ENCODE measurements at regions of chr9 and their contacts with region 1.

Region 1: DNA sequence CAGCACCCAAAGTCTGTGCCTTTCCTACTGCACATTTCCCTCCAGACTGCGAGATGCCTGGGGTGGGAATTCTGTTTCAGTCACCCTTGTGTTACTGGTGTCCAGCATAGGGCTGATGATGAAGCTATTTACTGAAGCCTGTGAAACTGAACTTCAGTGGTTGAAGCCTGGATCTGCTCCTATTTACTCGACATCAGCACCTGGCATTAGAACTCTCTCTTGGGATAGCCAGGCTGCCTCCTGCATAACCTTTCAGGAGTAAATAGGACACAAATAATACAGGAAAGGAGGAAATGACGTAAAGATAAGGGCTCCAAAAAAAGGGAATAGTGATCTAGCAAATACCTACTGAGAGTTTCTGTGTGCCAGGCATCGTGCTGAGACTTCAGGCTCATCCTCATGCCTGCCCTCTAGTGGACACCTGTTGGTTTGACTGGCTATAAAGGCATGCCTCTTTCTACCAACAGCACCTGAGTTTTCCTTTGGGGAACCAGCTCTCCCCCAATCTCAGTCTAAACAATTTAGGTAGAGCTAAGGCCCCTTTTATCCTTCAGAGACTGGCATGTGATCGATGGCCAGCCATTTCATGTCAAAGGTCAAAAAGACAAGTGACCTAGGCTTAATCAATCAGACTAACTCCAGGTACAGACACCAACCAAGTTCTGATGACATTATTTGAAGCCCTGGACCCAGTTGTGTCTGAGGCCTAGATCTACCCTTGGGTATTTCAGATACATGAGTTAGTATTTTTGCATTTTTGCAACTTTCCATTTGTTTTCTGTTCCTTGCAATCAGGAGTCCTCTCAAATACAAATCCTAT is 192.1 kb upstream of the TRIM32 start:
- DNase-seq: peak in 1 of 2 experiments; percentile 32
- ATAC-seq: peak in 1 of 2 experiments; percentile 42; a peak in 2 of 6 replicates
- H3K4me3 ChIP-seq: no peak overlapping the region
- H3K27ac ChIP-seq: peak overlapping the region; percentile 35 to 85; a peak in 4 of 6 replicates
- H3K4me1 ChIP-seq: peaks cover 50% of the 10 kb centered on the region
- CTCF ChIP-seq: peak; percentile 60
- EP300 ChIP-seq: no peak
- POLR2A ChIP-seq: no peak
- RAD21 ChIP-seq: peak; percentile 39 to 49; a peak in 4 of 5 replicates

Region 2: DNA sequence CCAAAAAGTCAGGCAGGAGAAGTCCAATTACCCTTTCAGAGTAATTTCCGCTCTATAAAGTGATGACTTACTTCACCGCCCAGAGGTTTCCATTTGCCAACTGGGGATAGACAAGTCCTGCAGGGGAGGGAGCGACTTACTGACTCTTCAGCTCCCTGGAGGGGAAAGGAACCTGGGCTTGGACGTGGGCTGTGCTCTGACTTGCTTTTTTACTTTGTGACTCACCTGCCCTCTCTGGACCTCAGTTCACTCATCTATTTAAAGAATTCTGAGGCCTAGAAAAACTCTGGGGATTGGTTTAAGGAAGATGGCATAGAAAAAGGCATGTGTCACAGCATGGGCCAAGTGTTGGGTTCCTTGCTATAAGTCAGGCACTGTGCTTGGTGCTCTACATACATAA is 11.7 kb after region 1 on chr9:
- CTCF ChIA-PET with region 1: interaction called, 10 read pairs
- POLR2A ChIA-PET with region 1: no interaction called
- DNase-seq: no peak
- ATAC-seq: no peak; a peak in 1 of 6 replicates
- H3K4me3 ChIP-seq: no peak overlapping the region
- H3K27ac ChIP-seq: peak overlapping the region in 1 of 2 experiments; percentile 62; a peak in 2 of 6 replicates
- H3K4me1 ChIP-seq: peaks cover 37% of the 10 kb centered on the region
- CTCF ChIP-seq: no peak
- EP300 ChIP-seq: no peak
- POLR2A ChIP-seq: no peak
- RAD21 ChIP-seq: no peak